ENCODE measurements at regions of chr1 and their contacts with region 1.

Region 1: GRCh38 chr1:240575981-240576662 is 35.8 kb downstream of the GREM2 start:
- DNase-seq: peak; percentile 69 to 83 (median 79)
- H3K4me3 ChIP-seq: no peak overlapping the region
- H3K4me3 Mint-ChIP-seq: peak overlapping the region; percentile 46 to 87 (median 68)
- H3K27ac ChIP-seq: peak overlapping the region; percentile 53
- H3K27ac Mint-ChIP-seq: peak overlapping the region; percentile 81 to 92 (median 89)
- H3K4me1 ChIP-seq: peaks cover 19% of the 10 kb centered on the region
- H3K4me1 Mint-ChIP-seq: peaks cover 14 to 48% (median 33%) of the 10 kb centered on the region in 4 donors
- H3K27me3 ChIP-seq: no peaks in the 10 kb centered on the region
- H3K27me3 Mint-ChIP-seq: no peaks in the 10 kb centered on the region

Region 2: DNA sequence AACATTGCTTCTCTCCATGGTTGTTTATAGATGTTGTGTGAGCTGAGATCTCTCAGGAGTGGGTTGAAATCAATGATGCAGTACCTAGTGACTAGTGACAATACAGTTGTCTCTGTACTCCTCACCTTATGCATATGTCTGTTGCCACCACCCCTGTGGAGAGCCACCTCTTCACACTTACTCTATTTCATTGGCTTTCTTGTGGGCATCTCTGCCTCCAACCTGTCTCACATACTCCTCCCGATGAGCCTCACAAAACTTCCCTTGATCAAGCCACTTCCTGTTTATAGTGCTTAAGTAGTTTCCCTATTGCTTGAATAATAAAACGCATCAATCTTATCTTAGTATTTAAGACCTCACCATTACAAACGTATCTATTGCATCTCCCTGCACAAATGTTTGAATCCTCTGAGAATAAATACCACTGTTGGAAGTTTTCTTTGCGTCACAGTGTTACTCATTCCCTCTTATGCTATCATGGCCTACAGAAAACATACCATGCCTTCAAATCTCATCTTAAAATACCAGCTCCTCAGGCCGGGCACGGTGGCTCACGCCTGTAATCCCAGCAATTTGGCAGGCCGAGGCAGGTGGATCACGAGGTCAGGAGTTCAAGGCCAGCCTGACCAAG is 90.6 kb after region 1 on chr1:
- CTCF ChIA-PET with region 1: no interaction called
- POLR2A ChIA-PET with region 1: no interaction called
- intact Hi-C with region 1: loop called (anchors 2 kb)
- DNase-seq: peak; percentile 33 to 70 (median 60)
- H3K4me3 ChIP-seq: no peak overlapping the region
- H3K4me3 Mint-ChIP-seq: peak overlapping the region in 7 of 8 donors; percentile 10 to 80 (median 41)
- H3K27ac ChIP-seq: no peak overlapping the region
- H3K27ac Mint-ChIP-seq: peak overlapping the region; percentile 47 to 94 (median 85)
- H3K4me1 ChIP-seq: peaks cover 25% of the 10 kb centered on the region
- H3K4me1 Mint-ChIP-seq: peaks cover 8 to 21% (median 15%) of the 10 kb centered on the region in 4 donors
- H3K27me3 ChIP-seq: no peaks in the 10 kb centered on the region
- H3K27me3 Mint-ChIP-seq: no peaks in the 10 kb centered on the region

Region 3: GRCh38 chr1:241181471-241181870 is 605.3 kb after region 1 on chr1:
- CTCF ChIA-PET with region 1: no interaction called
- POLR2A ChIA-PET with region 1: no interaction called
- intact Hi-C with region 1: no loop called
- DNase-seq: no peak
- H3K4me3 ChIP-seq: no peak overlapping the region
- H3K4me3 Mint-ChIP-seq: no peak overlapping the region
- H3K27ac ChIP-seq: no peak overlapping the region
- H3K27ac Mint-ChIP-seq: no peak overlapping the region
- H3K4me1 ChIP-seq: no peaks in the 10 kb centered on the region
- H3K4me1 Mint-ChIP-seq: no peaks in the 10 kb centered on the region
- H3K27me3 ChIP-seq: no peaks in the 10 kb centered on the region
- H3K27me3 Mint-ChIP-seq: no peaks in the 10 kb centered on the region

Region 4: DNA sequence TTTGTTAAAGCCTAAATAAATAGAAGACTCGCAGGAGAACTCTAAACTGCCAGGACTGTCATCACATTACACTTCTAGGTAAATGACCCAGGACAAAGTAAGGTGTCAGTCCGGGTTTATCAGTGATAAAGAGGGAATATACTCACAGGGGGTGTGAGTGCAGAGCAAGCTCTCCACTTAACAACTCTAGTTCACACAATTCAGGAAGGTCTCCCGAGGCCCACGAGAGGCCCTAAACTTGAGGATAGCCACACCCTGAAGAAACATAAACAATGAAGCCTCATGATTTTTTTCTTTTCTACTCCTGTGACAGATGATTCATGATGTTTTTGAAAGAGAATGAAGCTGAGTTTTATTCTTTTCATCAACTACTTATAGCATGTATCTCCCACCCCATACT is 1206.3 kb after region 1 on chr1:
- CTCF ChIA-PET with region 1: no interaction called
- POLR2A ChIA-PET with region 1: no interaction called
- intact Hi-C with region 1: no loop called
- DNase-seq: no peak
- H3K4me3 ChIP-seq: no peak overlapping the region
- H3K4me3 Mint-ChIP-seq: no peak overlapping the region
- H3K27ac ChIP-seq: no peak overlapping the region
- H3K27ac Mint-ChIP-seq: no peak overlapping the region
- H3K4me1 ChIP-seq: no peaks in the 10 kb centered on the region
- H3K4me1 Mint-ChIP-seq: no peaks in the 10 kb centered on the region
- H3K27me3 ChIP-seq: no peaks in the 10 kb centered on the region
- H3K27me3 Mint-ChIP-seq: peaks cover 7 to 8% of the 10 kb centered on the region in 2 donors